ENCODE measurements at regions of chr17 and their contacts with region 1.

Region 1: GRCh38 chr17:12667299-12667958 is 1.7 kb downstream of the MYOCD start:
- DNase-seq: peak; percentile 40
- ATAC-seq: peak; percentile 70
- H3K4me3 ChIP-seq: no peak overlapping the region
- H3K27ac ChIP-seq: no peak overlapping the region
- H3K4me1 ChIP-seq: no peaks in the 10 kb centered on the region
- H3K27me3 ChIP-seq: peaks cover 34% of the 10 kb centered on the region
- CTCF ChIP-seq: peak; percentile 35 to 53 (median 36); a peak in 4 of 6 replicates
- POLR2A ChIP-seq: no peak
- RAD21 ChIP-seq: peak; percentile 70

Region 2: GRCh38 chr17:12180644-12181261 is 486.7 kb before region 1 on chr17:
- CTCF ChIA-PET with region 1: interaction called, 3 read pairs
- POLR2A ChIA-PET with region 1: no interaction called
- RAD21 ChIA-PET with region 1: no interaction called
- intact Hi-C with region 1: loop called (anchors 2 kb)
- DNase-seq: peak; percentile 47
- ATAC-seq: peak; percentile 79
- H3K4me3 ChIP-seq: no peak overlapping the region
- H3K27ac ChIP-seq: no peak overlapping the region
- H3K4me1 ChIP-seq: no peaks in the 10 kb centered on the region
- H3K27me3 ChIP-seq: no peaks in the 10 kb centered on the region
- CTCF ChIP-seq: peak; percentile 51 to 89 (median 70); a peak in 5 of 6 replicates
- POLR2A ChIP-seq: no peak
- RAD21 ChIP-seq: peak; percentile 71

Region 3: DNA sequence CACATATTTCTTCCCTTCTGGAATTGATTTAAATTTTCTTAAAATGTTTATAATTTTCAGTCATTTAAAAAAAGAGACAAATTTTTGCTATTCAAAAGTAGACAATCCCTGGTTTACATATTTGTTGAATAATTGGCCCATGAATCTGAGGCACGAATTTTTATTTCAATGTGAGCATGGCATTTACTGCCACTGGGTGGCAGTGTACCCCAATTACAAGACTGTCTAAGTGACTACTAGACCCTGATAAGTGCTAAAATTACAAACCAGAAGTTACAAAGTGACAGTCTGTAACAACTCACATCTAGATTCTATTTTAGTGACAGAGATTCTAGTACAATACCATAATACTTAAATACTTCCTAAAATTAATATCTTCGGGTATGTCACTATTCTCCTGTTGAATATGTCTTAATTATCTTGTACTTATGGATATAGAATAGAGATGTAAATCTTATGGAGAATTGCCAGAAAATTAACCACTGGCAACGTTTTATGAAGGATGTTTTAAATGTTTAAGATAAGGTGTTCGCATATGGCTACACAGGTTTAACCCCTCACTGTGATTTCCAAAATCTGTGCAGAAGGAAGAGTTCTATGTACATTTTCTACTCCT is 410.9 kb before region 1 on chr17:
- CTCF ChIA-PET with region 1: interaction called, 12 read pairs
- POLR2A ChIA-PET with region 1: no interaction called
- RAD21 ChIA-PET with region 1: no interaction called
- intact Hi-C with region 1: loop called (anchors 1 kb)
- DNase-seq: peak; percentile 37
- ATAC-seq: peak; percentile 74
- H3K4me3 ChIP-seq: no peak overlapping the region
- H3K27ac ChIP-seq: no peak overlapping the region
- H3K4me1 ChIP-seq: no peaks in the 10 kb centered on the region
- H3K27me3 ChIP-seq: peaks cover 30% of the 10 kb centered on the region; the same call in 1 of the 2 replicates
- CTCF ChIP-seq: peak; percentile 54 to 81 (median 73); a peak in 5 of 6 replicates
- POLR2A ChIP-seq: no peak
- RAD21 ChIP-seq: peak; percentile 68

Region 4: DNA sequence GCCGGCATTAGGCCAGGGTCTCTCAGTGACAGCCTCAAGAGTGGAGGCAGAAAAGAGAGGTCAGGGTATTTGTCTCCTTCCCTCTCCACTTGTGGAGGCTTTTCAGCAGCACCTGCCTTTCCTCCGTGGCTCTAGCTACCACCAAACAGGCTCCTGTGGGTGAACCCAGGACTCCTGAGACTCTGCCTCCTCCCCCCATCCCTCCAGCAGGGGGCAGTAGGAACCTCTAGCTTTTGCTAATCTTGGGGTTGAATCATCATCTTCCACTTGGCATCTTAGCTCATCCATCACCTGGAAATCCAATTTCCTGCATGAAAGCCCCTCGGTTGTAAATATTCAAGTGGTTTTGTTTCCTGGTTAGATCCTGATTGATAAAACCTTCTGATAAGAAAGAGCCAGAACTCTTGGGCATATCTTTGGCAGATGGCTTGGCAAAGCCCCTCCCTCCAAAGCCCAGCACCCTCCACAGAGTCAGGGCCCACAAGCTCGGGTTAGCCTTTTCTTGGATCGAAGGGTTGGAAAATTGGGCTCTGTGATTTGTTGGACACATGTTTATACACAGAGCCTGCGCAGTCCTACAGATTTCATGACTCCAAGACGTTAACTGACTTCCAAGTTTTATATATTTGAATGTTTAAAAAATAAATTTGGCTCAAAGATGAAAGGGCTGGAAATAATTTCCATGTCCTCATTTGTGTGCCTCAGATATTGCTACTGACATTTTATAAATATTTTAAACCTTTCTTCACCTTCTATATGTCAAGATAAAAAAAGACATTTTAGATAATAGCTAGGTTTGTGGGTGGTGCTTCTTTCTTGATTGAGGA is 324.6 kb before region 1 on chr17:
- CTCF ChIA-PET with region 1: interaction called, 32 read pairs
- POLR2A ChIA-PET with region 1: no interaction called
- RAD21 ChIA-PET with region 1: interaction called in 1 of 2 experiments, 3 read pairs
- intact Hi-C with region 1: loop called (anchors 1 kb)
- DNase-seq: peak; percentile 8
- ATAC-seq: peak; percentile 82
- H3K4me3 ChIP-seq: no peak overlapping the region
- H3K27ac ChIP-seq: no peak overlapping the region
- H3K4me1 ChIP-seq: no peaks in the 10 kb centered on the region
- H3K27me3 ChIP-seq: peaks cover 17% of the 10 kb centered on the region
- CTCF ChIP-seq: peak; percentile 22 to 85 (median 71); a peak in 5 of 6 replicates
- POLR2A ChIP-seq: no peak
- RAD21 ChIP-seq: peak; percentile 45

Measured in HCT116 (cell line).